ENCODE measurements at regions of chr19 and their contacts with region 1.

Region 1: GRCh38 chr19:35213663-35214632 is 14.6 kb downstream of the FAM187B start:
- DNase-seq: peak; percentile 53 to 97 (median 78)
- ATAC-seq: peak; percentile 40
- H3K4me3 ChIP-seq: peak overlapping the region; percentile 16
- H3K4me3 Mint-ChIP-seq: peak overlapping the region; percentile 28
- H3K27ac ChIP-seq: peak overlapping the region; percentile 95 to 96
- H3K27ac Mint-ChIP-seq: peak overlapping the region; percentile 99
- H3K4me1 ChIP-seq: peaks cover 79% of the 10 kb centered on the region
- H3K4me1 Mint-ChIP-seq: peaks cover 71% of the 10 kb centered on the region
- H3K27me3 ChIP-seq: no peaks in the 10 kb centered on the region
- H3K27me3 Mint-ChIP-seq: no peaks in the 10 kb centered on the region
- CTCF ChIP-seq: no peak

Region 2: GRCh38 chr19:34618410-34618809 is 595.5 kb before region 1 on chr19:
- CTCF ChIA-PET with region 1: no interaction called
- POLR2A ChIA-PET with region 1: no interaction called
- intact Hi-C with region 1: no loop called
- DNase-seq: no peak
- ATAC-seq: no peak
- H3K4me3 ChIP-seq: no peak overlapping the region
- H3K4me3 Mint-ChIP-seq: no peak overlapping the region
- H3K27ac ChIP-seq: no peak overlapping the region
- H3K27ac Mint-ChIP-seq: no peak overlapping the region
- H3K4me1 ChIP-seq: no peaks in the 10 kb centered on the region
- H3K4me1 Mint-ChIP-seq: no peaks in the 10 kb centered on the region
- H3K27me3 ChIP-seq: no peaks in the 10 kb centered on the region
- H3K27me3 Mint-ChIP-seq: no peaks in the 10 kb centered on the region
- CTCF ChIP-seq: no peak

Region 3: DNA sequence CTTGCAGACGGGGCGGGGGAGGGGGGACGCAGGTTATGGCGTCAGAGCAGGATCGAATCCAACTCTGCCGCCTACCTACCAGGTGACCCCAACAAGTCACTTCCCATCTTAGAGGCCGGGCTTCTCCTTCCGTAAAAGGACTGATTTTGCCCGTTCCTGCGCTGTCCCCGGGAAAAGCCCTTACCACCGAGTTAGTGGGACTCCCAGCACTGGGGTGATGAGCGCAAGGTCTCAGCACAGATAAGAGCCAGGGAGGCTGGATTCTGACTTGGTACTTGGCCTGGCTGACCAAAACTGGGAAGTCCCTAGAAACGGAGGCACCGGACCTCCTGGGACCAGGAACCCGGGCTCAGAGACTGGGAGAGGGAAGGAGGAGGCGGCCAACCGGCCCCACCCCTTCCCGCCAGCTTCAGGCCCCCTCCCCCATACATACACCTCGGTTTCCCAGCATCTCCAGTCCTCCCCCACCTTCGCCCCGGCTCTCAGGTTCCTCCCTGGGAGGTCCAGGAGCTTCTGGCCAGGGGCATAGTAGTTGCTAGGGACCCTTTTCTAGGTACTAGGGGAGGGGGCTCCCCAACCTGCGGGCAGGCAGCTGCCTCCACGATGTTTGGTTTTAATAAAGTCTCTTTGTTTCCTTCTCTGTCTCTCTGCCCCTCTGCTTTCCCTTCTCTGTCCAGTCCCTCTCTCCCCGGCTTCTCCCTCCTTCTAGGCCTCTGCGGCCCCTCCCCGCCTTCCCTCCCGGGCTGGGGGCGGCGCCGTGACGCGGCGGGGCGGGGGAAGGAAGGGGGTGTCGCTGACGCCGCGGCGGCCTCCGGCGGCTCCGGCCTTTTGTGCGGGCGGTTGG is 214.2 kb before region 1 on chr19 and contains the start of gene GRAMD1A:
- CTCF ChIA-PET with region 1: no interaction called
- POLR2A ChIA-PET with region 1: interaction called, 5 read pairs
- intact Hi-C with region 1: loop called (anchors 5 kb)
- DNase-seq: peak; percentile 50 to 85 (median 74)
- ATAC-seq: peak; percentile 28
- H3K4me3 ChIP-seq: peak within 1 kb of the TSS; percentile 59
- H3K4me3 Mint-ChIP-seq: peak within 1 kb of the TSS; percentile 99
- H3K27ac ChIP-seq: peak within 1 kb of the TSS; percentile 79 to 92
- H3K27ac Mint-ChIP-seq: peak within 1 kb of the TSS; percentile 98
- H3K4me1 ChIP-seq: peaks cover 89% of the 10 kb centered on the region
- H3K4me1 Mint-ChIP-seq: peaks cover 72% of the 10 kb centered on the region
- H3K27me3 ChIP-seq: no peaks in the 10 kb centered on the region
- H3K27me3 Mint-ChIP-seq: no peaks in the 10 kb centered on the region
- CTCF ChIP-seq: no peak
- total RNA-seq, gene GRAMD1A: 221 to 229 TPM

Region 4: GRCh38 chr19:35140962-35141637 is 72.8 kb before region 1 on chr19:
- CTCF ChIA-PET with region 1: interaction called, 8 read pairs
- POLR2A ChIA-PET with region 1: interaction called, 38 read pairs
- intact Hi-C with region 1: loop called (anchors 2 kb)
- DNase-seq: peak; percentile 91 to 99 (median 96)
- ATAC-seq: peak; percentile 87
- H3K4me3 ChIP-seq: peak overlapping the region; percentile 42
- H3K4me3 Mint-ChIP-seq: peak overlapping the region; percentile 90
- H3K27ac ChIP-seq: no peak overlapping the region
- H3K27ac Mint-ChIP-seq: peak overlapping the region; percentile 79
- H3K4me1 ChIP-seq: peaks cover 54% of the 10 kb centered on the region
- H3K4me1 Mint-ChIP-seq: peaks cover 43% of the 10 kb centered on the region
- H3K27me3 ChIP-seq: no peaks in the 10 kb centered on the region
- H3K27me3 Mint-ChIP-seq: no peaks in the 10 kb centered on the region
- CTCF ChIP-seq: no peak

Region 5: DNA sequence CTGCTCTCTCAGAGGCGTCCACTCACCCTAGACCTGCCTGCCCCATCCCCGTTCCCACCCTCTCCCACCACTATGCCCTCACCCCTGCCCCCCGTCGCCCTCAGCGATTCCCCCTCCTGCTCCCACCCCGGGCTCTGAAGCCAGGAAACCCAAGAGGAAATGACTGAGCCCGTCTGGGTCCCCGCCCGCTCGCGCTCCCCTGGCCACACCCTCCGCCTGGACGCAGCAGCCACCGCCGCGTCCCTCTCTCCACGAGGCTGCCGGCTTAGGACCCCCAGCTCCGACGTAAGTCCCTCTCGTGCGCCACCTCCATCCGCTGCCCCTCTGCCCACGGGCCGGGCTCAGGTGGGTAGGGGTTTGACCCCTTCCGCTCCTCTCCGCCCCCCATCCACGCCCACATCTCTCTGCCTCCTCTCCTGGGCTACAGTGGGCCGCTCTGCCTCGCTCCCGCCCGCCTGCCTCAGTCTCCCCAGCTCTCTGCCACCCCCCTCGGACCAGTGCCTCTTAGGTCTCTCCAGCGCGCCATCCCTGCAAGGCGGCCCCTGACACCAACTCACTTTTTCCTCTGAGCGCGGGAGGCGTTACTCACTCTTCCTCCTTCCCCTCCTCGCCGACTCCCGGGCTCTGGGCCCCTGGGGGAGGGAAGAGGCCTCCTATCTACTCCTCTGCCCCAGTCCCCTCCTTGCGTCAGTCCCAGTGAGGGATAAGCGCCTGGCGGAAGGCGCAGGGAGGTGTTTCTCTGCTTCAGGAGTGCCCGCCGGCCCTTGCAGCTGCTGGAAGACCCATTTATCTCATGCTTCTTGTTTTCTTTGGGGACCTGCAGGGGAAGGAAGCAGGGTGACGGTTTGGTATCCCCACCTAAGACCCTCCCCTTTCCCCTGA is 59.2 kb before region 1 on chr19 and contains the start of gene FXYD5:
- CTCF ChIA-PET with region 1: interaction called, 13 read pairs
- POLR2A ChIA-PET with region 1: interaction called, 56 read pairs
- intact Hi-C with region 1: loop called (anchors 1 to 2 kb)
- DNase-seq: peak; percentile 49 to 82 (median 71)
- ATAC-seq: peak; percentile 75
- H3K4me3 ChIP-seq: peak within 1 kb of the TSS; percentile 99
- H3K4me3 Mint-ChIP-seq: peak within 1 kb of the TSS; percentile 98
- H3K27ac ChIP-seq: peak within 1 kb of the TSS; percentile 80 to 89
- H3K27ac Mint-ChIP-seq: peak within 1 kb of the TSS; percentile 98
- H3K4me1 ChIP-seq: peaks cover 55% of the 10 kb centered on the region
- H3K4me1 Mint-ChIP-seq: peaks cover 71% of the 10 kb centered on the region
- H3K27me3 ChIP-seq: no peaks in the 10 kb centered on the region
- H3K27me3 Mint-ChIP-seq: no peaks in the 10 kb centered on the region
- CTCF ChIP-seq: no peak
- total RNA-seq, gene FXYD5: 587 to 615 TPM

Region 6: DNA sequence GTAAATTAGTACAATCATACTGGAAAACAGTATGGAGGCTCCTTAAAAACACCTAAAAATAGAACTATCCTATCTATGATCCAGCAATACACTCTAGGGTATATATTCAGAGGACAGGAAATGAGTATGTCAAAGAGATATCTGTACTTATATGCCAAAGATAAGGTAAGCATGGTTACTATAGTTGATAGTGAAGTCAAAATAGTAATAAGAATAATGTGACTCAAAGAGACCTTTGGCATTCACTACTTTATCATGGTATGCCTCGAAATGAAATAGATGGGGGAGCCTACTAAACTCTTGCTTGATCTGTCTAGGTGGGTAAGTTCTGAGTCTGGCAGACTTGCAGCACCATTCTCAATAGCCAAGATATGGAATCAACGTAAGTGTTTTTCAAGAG is 29.1 kb before region 1 on chr19:
- CTCF ChIA-PET with region 1: interaction called, 4 read pairs
- POLR2A ChIA-PET with region 1: interaction called, 10 read pairs
- intact Hi-C with region 1: no loop called
- DNase-seq: no peak
- ATAC-seq: no peak
- H3K4me3 ChIP-seq: no peak overlapping the region
- H3K4me3 Mint-ChIP-seq: no peak overlapping the region
- H3K27ac ChIP-seq: no peak overlapping the region
- H3K27ac Mint-ChIP-seq: no peak overlapping the region
- H3K4me1 ChIP-seq: peaks cover 7% of the 10 kb centered on the region
- H3K4me1 Mint-ChIP-seq: peaks cover 24% of the 10 kb centered on the region
- H3K27me3 ChIP-seq: no peaks in the 10 kb centered on the region
- H3K27me3 Mint-ChIP-seq: no peaks in the 10 kb centered on the region
- CTCF ChIP-seq: no peak

Region 7: DNA sequence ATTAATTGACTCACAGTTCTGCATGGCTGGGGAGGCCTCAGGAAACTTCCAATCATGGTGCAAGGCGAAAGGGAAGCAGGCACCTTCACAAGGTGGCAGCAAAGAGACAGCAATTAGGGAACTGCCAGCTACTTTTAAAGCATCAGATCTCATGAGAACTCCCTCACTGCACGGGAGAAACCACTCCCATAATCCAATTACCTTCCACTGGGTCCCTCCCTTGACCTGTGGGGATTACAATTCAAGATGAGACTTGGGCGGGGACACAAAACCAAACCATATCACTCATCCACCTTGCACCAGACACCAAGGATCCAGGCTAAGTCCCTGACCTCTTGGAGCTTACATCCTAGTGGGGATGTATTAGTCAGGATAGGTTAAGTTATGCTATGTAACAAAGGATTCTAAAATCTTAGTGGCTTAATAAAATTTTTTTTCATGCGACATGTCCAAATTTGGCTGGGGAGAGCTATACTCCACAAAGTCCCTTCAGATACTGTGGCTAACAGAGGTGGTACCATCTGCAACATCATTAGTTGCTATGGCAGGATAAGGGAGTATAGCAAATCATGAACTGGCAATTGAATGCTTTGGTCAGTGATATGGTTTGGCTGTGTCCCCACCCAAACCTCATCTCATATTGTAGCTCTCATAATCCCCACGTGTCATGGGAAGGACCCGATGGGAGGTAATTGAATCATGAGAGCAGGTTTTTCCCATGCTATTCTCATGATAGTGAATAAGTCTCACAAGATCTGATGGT is 22.9 kb after region 1 on chr19:
- CTCF ChIA-PET with region 1: interaction called, 10 read pairs
- POLR2A ChIA-PET with region 1: interaction called, 34 read pairs
- intact Hi-C with region 1: no loop called
- DNase-seq: peak in 9 of 14 experiments; percentile 23 to 66 (median 48)
- ATAC-seq: no peak
- H3K4me3 ChIP-seq: no peak overlapping the region
- H3K4me3 Mint-ChIP-seq: no peak overlapping the region
- H3K27ac ChIP-seq: no peak overlapping the region
- H3K27ac Mint-ChIP-seq: no peak overlapping the region
- H3K4me1 ChIP-seq: peaks cover 17% of the 10 kb centered on the region
- H3K4me1 Mint-ChIP-seq: peaks cover 33% of the 10 kb centered on the region
- H3K27me3 ChIP-seq: no peaks in the 10 kb centered on the region
- H3K27me3 Mint-ChIP-seq: no peaks in the 10 kb centered on the region
- CTCF ChIP-seq: peak; percentile 48

Region 8: DNA sequence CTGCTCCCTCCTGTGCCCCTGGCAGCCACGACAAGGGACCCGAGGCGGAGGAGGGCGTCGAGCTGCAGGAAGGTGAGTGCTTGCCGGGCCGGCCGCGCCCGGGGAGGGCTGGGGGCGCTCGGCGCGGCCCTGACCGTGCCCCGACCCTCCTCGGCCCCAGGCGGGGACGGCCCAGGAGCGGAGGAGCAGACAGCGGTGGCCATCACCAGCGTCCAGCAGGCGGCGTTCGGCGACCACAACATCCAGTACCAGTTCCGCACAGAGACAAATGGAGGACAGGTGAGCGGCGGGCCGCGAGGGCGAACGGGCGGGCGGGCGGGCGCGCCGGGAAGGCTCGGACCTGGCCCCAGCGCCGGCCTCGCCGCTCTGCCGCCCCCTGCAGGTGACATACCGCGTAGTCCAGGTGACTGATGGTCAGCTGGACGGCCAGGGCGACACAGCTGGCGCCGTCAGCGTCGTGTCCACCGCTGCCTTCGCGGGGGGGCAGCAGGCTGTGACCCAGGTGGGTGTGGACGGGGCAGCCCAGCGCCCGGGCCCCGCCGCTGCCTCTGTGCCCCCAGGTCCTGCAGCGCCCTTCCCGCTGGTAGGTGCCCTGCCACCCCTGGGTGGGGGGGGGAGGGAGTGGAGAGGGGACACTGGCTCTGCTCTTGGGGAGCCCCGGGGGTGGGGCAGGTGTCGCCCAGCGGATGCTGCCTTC is 55.6 kb after region 1 on chr19:
- CTCF ChIA-PET with region 1: interaction called, 3 read pairs
- POLR2A ChIA-PET with region 1: interaction called, 27 read pairs
- intact Hi-C with region 1: loop called (anchors 5 to 10 kb)
- DNase-seq: peak; percentile 63 to 90 (median 74)
- ATAC-seq: peak; percentile 46
- H3K4me3 ChIP-seq: peak overlapping the region; percentile 32
- H3K4me3 Mint-ChIP-seq: peak overlapping the region; percentile 83
- H3K27ac ChIP-seq: peak overlapping the region in 1 of 2 donors; percentile 65
- H3K27ac Mint-ChIP-seq: peak overlapping the region; percentile 81
- H3K4me1 ChIP-seq: peaks cover 54% of the 10 kb centered on the region
- H3K4me1 Mint-ChIP-seq: peaks cover 41% of the 10 kb centered on the region
- H3K27me3 ChIP-seq: no peaks in the 10 kb centered on the region
- H3K27me3 Mint-ChIP-seq: no peaks in the 10 kb centered on the region
- CTCF ChIP-seq: peak; percentile 77

Measured in CD4-positive, alpha-beta T cell (primary cell).